AG04450 (cell line): ENCODE measurements at regions of chr19 and their contacts with region 1.

Region 1: GRCh38 chr19:1590641-1591397 is 1.8 kb downstream of the MBD3 start:
- DNase-seq: no peak
- H3K4me3 ChIP-seq: peak overlapping the region; percentile 90
- H3K27ac ChIP-seq: no peak overlapping the region
- H3K27me3 ChIP-seq: no peaks in the 10 kb centered on the region
- CTCF ChIP-seq: peak; percentile 57

Region 2: GRCh38 chr19:1551068-1552040 is 39.5 kb before region 1 on chr19:
- CTCF ChIA-PET with region 1: interaction called, 10 read pairs
- POLR2A ChIA-PET with region 1: no interaction called
- DNase-seq: no peak
- H3K4me3 ChIP-seq: no peak overlapping the region
- H3K27ac ChIP-seq: no peak overlapping the region
- H3K27me3 ChIP-seq: no peaks in the 10 kb centered on the region
- CTCF ChIP-seq: no peak

Region 3: GRCh38 chr19:1579212-1579611 is 11.6 kb before region 1 on chr19:
- CTCF ChIA-PET with region 1: interaction called, 3 read pairs
- POLR2A ChIA-PET with region 1: interaction called, 11 read pairs
- DNase-seq: no peak
- H3K4me3 ChIP-seq: no peak overlapping the region
- H3K27ac ChIP-seq: no peak overlapping the region
- H3K27me3 ChIP-seq: no peaks in the 10 kb centered on the region
- CTCF ChIP-seq: no peak

Region 4: DNA sequence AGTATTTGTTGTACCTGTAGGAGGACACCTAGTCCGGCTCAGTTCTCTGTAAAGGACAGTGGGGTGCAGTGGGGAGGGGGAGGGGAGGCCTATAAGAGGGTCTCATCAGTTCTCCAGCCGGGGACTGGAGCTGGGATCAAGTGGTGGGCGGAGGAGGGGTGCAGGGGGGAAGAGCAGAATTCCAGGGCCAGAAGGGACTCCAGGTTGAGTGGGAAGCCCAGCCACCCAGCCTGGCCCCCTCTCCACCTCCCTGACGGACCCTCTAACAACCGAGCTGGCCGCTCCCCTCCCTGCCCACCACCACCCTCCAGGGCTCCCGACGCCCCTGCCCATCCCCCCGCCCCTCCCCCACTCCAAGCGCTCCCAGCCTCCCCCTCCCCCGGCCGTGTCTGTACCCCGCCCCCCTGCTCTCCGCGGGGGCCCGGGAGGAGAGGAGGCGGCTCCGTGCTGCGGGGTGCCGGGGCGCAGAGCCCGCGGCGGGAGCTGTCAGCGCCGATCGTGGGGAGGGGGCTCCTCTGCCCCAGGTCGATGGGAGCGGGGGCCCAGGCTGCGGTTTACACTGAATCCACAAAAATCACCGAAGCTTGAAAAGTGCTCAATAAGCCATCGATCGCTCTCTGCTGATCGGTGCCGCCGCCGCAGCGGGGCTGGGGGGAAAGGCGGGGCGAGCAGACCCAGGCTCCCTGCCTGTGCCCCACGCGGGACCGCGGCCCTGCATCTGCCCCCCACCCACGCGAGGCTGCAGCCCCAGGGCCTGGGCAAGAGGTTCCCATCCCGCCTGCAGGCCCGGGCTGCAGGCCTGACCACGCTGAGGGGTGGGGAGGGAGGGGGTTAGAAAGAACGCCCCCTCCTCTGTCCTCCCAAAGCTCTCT is 127.8 kb after region 1 on chr19:
- CTCF ChIA-PET with region 1: no interaction called
- POLR2A ChIA-PET with region 1: no interaction called
- DNase-seq: no peak
- H3K4me3 ChIP-seq: no peak overlapping the region
- H3K27ac ChIP-seq: no peak overlapping the region
- H3K27me3 ChIP-seq: peaks cover 26% of the 10 kb centered on the region
- CTCF ChIP-seq: no peak